PC-3 (cell line): ENCODE measurements at regions of chr18 and their contacts with region 1.

Region 1: GRCh38 chr18:73848656-73849055 is 299.0 kb downstream of the FBXO15 start:
- DNase-seq: peak; percentile 79
- ATAC-seq: peak; percentile 77
- H3K4me3 ChIP-seq: no peak overlapping the region
- H3K27ac ChIP-seq: peak overlapping the region; percentile 46; the same call in 1 of the 2 replicates
- H3K4me1 ChIP-seq: peaks cover 17% of the 10 kb centered on the region
- H3K27me3 ChIP-seq: no peaks in the 10 kb centered on the region
- CTCF ChIP-seq: no peak

Region 2: DNA sequence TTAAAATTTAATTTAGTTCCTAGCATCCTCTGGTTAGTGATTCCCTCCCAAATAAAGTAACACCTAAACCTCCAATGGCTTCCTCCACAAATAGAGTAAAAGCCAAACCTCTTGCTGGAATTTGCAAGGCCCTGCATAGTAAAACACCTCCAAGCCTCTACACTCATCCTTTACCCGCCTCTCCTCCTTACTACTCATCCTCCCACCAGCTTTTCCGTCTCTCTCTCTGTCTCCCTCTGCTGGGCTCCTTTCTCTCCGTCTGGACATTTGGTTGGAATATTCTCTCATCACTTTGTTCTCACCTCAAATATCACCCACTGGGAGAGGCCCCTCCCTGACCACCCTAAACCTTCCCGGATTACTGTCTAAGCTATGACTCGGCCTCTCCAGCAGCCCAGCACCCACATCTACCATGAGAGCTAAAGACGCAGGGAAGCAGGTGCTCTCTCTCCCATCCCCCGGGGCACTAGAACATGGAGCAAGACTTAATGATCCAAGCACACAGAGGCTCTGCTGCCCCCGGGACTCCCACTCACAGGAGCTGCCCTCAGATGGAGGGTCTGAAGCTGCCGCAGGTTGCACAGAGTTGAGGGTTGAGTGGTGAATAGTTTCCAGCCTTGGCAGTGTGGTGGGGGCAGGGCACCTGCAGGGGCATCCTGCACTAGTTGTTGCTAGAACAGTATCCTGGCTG is 131.8 kb after region 1 on chr18:
- CTCF ChIA-PET with region 1: interaction called, 3 read pairs
- POLR2A ChIA-PET with region 1: no interaction called
- intact Hi-C with region 1: loop called (anchors 5 kb)
- DNase-seq: peak; percentile 75
- ATAC-seq: peak; percentile 80
- H3K4me3 ChIP-seq: no peak overlapping the region
- H3K27ac ChIP-seq: no peak overlapping the region
- H3K4me1 ChIP-seq: peaks cover 25% of the 10 kb centered on the region
- H3K27me3 ChIP-seq: no peaks in the 10 kb centered on the region
- CTCF ChIP-seq: peak; percentile 87